Activated CD4-positive, alpha-beta T cell treated with anti-CD3 and anti-CD28 coated beads, Interleukin-2, amount 10 ng/mL, durations not matched to agents 24 days and 14 days (primary cell): ENCODE measurements at regions of chr3 and their contacts with region 1.

Region 1: DNA sequence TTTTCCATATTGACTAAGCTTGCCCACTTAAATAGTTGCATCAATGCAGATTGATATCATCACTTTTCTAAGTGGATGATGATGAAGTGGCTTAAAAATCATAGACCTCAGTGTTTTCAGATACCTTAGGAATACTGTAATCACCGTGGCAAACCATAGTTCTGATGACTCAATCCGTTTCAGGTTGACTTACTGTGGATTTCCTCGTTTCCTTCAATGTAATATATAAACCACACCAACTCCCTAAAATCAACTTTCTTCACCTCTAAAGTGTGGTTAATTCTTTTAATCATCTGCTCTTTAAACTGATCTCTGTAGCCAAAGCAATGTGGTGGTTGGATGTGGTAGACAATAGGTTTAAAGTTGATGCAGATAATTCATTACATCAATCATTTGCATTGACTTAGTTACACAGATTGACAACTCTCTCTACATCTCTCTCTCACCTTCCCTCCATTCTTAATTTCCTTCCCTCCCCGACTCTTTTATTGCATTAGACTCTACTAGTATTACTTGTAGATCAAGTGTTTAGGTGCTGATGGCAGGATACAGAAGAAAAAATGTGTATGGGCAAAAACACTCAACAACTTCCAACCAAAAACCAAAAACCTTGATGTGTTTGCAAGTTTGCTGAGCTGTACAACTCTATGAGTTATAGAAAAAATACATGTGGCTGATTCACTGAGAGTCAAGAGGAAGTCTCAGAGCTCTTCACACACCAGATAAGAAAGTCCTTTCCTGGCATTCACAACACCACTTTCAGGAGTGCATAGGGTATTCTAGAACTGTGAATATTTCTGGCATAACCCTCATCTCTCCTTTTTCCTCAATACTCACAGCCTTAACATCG is 243.5 kb downstream of the NFKBIZ start:
- DNase-seq: peak; percentile 71
- H3K4me3 Mint-ChIP-seq: peak overlapping the region; percentile 44
- H3K27ac Mint-ChIP-seq: peak overlapping the region; percentile 92
- H3K4me1 Mint-ChIP-seq: peaks cover 43% of the 10 kb centered on the region
- H3K27me3 Mint-ChIP-seq: peaks cover 4% of the 10 kb centered on the region

Region 2: GRCh38 chr3:101827211-101828174 is 265.3 kb before region 1 on chr3:
- intact Hi-C with region 1: loop called (anchors 1 kb)
- DNase-seq: peak; percentile 94
- H3K4me3 Mint-ChIP-seq: peak overlapping the region; percentile 86
- H3K27ac Mint-ChIP-seq: peak overlapping the region; percentile 97
- H3K4me1 Mint-ChIP-seq: peaks cover 52% of the 10 kb centered on the region
- H3K27me3 Mint-ChIP-seq: no peaks in the 10 kb centered on the region

Region 3: DNA sequence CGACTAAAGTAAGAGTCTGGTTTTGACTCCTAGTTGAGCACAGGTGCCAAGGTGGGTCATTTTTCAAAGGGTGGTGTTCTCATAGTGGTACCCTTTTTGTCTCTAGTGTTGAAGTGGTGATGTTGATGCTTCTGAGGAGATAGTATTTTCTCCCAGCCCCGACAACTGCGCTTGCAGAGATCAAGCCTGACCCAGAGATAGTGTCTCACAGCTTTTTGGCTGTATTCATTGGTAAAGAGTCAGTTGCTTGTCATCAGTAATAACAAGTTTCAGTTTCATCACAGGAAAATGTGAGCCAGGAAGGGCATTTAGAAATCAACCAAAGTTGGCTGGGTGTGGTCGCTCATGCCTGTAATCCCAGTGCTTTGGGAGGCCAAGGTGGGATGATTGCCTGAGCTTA is 104.3 kb before region 1 on chr3:
- intact Hi-C with region 1: loop called (anchors 1 kb)
- DNase-seq: peak; percentile 70
- H3K4me3 Mint-ChIP-seq: peak overlapping the region; percentile 31
- H3K27ac Mint-ChIP-seq: peak overlapping the region; percentile 73
- H3K4me1 Mint-ChIP-seq: peaks cover 39% of the 10 kb centered on the region
- H3K27me3 Mint-ChIP-seq: peaks cover 21% of the 10 kb centered on the region

Region 4: DNA sequence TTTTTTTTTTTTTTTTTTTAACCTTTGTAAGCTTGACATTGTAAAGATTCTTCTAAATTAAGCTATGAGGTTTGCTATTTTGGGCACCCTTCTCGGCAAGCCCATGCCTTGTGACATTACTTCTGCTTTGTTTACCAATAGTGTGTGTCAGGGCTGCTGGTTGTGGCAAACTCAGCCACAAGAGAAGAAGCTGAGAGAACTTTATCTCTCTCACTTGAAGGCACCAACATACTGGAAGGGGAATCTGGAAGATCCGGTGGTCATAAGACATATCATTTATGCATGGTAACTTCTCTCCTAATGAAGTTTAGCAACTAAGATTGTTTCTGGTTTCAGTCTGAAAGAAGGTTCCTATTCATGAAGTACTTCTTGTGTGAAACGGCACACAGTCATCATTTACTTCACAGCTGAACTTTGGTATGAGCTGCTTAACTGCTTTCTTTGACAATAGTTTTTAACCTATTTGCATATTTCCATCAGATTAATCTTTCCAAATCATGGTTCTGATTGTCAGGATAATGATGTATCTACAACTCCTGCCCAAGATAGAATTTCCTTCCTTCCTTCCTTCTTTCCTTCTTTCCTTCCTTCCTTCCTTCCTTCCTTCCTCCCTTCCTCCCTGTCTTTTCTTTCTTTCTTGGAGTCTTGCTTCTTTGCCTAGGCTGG is 54.2 kb before region 1 on chr3:
- intact Hi-C with region 1: no loop called
- DNase-seq: no peak
- H3K4me3 Mint-ChIP-seq: no peak overlapping the region
- H3K27ac Mint-ChIP-seq: no peak overlapping the region
- H3K4me1 Mint-ChIP-seq: peaks cover 5% of the 10 kb centered on the region
- H3K27me3 Mint-ChIP-seq: peaks cover 7% of the 10 kb centered on the region

Region 5: GRCh38 chr3:102113411-102114041 is 20.7 kb after region 1 on chr3:
- intact Hi-C with region 1: loop called (anchors 1 kb)
- DNase-seq: peak; percentile 68
- H3K4me3 Mint-ChIP-seq: peak overlapping the region; percentile 48
- H3K27ac Mint-ChIP-seq: peak overlapping the region; percentile 76
- H3K4me1 Mint-ChIP-seq: peaks cover 30% of the 10 kb centered on the region
- H3K27me3 Mint-ChIP-seq: no peaks in the 10 kb centered on the region

Region 6: GRCh38 chr3:102229062-102229655 is 136.3 kb after region 1 on chr3:
- intact Hi-C with region 1: loop called (anchors 2 kb)
- DNase-seq: peak; percentile 93
- H3K4me3 Mint-ChIP-seq: no peak overlapping the region
- H3K27ac Mint-ChIP-seq: no peak overlapping the region
- H3K4me1 Mint-ChIP-seq: peaks cover 10% of the 10 kb centered on the region
- H3K27me3 Mint-ChIP-seq: peaks cover 24% of the 10 kb centered on the region